ENCODE measurements at regions of chrX and their contacts with region 1.

Region 1: GRCh38 chrX:47836164-47837072 is at the start of gene ZNF81:
- ATAC-seq: peak; percentile 95 to 98 (median 97)
- H3K4me3 ChIP-seq: peak within 1 kb of the TSS; percentile 51 to 87 (median 64)
- H3K27ac ChIP-seq: peak within 1 kb of the TSS; percentile 91 to 96
- H3K4me1 ChIP-seq: peaks cover 8 to 9% of the 10 kb centered on the region in 2 donors
- total RNA-seq, gene ZNF81: 8.2 to 12.1 (median 9.7) TPM

Region 2: GRCh38 chrX:47321386-47321785 is 515.0 kb before region 1 on chrX:
- in situ Hi-C with region 1: no loop called
- ATAC-seq: peak in 7 of 8 experiments; percentile 49 to 97 (median 95)
- H3K4me3 ChIP-seq: no peak overlapping the region
- H3K27ac ChIP-seq: peak overlapping the region; percentile 63 to 82
- H3K4me1 ChIP-seq: peaks cover 17 to 19% of the 10 kb centered on the region in 2 donors

Region 3: GRCh38 chrX:48021026-48021900 is 184.8 kb after region 1 on chrX:
- in situ Hi-C with region 1: loop called in 1 of 9 experiments (anchors 10 kb)
- ATAC-seq: peak; percentile 82 to 87 (median 85)
- H3K4me3 ChIP-seq: peak overlapping the region; percentile 76 to 100 (median 83)
- H3K27ac ChIP-seq: peak overlapping the region; percentile 100
- H3K4me1 ChIP-seq: peaks cover 0 to 3% of the 10 kb centered on the region in 2 donors

Measured in motor neuron (in vitro differentiated cells).